Endothelial cell of umbilical vein (primary cell): ENCODE measurements at regions of chr12 and their contacts with region 1.

Region 1: GRCh38 chr12:62123721-62124203 is 136.4 kb upstream of the USP15 start:
- DNase-seq: peak; percentile 31
- H3K4me3 ChIP-seq: no peak overlapping the region
- H3K27ac ChIP-seq: no peak overlapping the region
- H3K4me1 ChIP-seq: peaks cover 7% of the 10 kb centered on the region
- H3K27me3 ChIP-seq: peaks cover 7 to 30% of the 10 kb centered on the region in 2 experiments
- CTCF ChIP-seq: peak; percentile 62 to 74
- POLR2A ChIP-seq: no peak

Region 2: GRCh38 chr12:60257063-60257462 is 1866.7 kb before region 1 on chr12:
- CTCF ChIA-PET with region 1: interaction called, 4 read pairs
- POLR2A ChIA-PET with region 1: no interaction called
- dilution Hi-C with region 1: no loop called
- intact Hi-C with region 1: loop called (anchors 10 kb)
- DNase-seq: peak; percentile 82
- H3K4me3 ChIP-seq: no peak overlapping the region
- H3K27ac ChIP-seq: no peak overlapping the region
- H3K4me1 ChIP-seq: no peaks in the 10 kb centered on the region
- H3K27me3 ChIP-seq: no peaks in the 10 kb centered on the region
- CTCF ChIP-seq: peak; percentile 14 to 33
- POLR2A ChIP-seq: no peak

Region 3: GRCh38 chr12:62232143-62232729 is 108.5 kb after region 1 on chr12:
- CTCF ChIA-PET with region 1: no interaction called
- POLR2A ChIA-PET with region 1: no interaction called
- dilution Hi-C with region 1: no loop called
- intact Hi-C with region 1: no loop called
- DNase-seq: no peak
- H3K4me3 ChIP-seq: no peak overlapping the region
- H3K27ac ChIP-seq: no peak overlapping the region
- H3K4me1 ChIP-seq: no peaks in the 10 kb centered on the region
- H3K27me3 ChIP-seq: no peaks in the 10 kb centered on the region
- CTCF ChIP-seq: no peak
- POLR2A ChIP-seq: no peak